Posterior cingulate gyrus (tissue), 11 donors: ENCODE measurements at regions of chr2 and their contacts with region 1.

Region 1: GRCh38 chr2:239979243-239980023 is 45.7 kb downstream of the NDUFA10 start:
- DNase-seq: peak in 6 of 10 donors; percentile 42 to 94 (median 65)

Region 2: DNA sequence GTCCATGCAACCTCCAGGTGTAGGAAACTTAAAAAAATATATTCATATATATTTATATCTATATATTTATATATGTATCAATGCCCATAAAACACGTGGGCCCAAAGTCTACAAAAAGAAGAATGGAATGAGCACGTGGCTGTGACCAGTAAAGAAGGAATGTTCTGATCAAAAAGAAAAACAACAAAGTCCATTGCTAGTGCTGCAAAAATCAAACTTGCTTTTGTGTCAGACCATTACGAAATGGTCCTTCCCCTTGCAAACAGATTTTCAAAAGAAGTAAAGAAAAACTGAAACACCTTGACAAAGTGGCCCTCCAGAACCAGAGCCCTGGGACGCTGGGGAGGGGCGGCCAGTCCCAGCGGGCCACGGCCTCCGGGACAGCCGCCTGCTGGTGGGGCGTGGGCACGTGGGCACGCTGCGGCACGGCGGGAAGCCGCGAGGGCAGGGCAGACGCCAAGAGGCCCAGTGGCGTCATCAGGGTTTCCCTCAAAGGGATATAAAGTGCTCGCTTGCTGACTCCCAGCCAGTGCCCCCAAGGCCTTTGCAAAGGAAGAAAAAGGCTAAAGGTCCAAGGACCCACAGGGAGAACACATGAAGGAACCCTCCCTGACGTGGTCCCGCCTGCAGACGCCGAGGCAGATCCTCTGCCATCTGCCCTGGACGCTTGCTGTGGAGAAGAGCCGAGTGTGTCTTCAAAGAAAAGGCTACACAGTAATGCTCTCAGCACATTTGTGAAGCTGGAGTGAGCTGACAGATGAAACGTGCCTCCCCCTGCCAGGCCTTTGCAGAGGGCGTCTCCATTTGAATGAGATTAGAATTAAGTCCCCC is 929.8 kb before region 1 on chr2:
- intact Hi-C with region 1: loop called (anchors 10 kb)
- DNase-seq: peak in 3 of 10 donors; percentile 42 to 59 (median 49)

Region 3: DNA sequence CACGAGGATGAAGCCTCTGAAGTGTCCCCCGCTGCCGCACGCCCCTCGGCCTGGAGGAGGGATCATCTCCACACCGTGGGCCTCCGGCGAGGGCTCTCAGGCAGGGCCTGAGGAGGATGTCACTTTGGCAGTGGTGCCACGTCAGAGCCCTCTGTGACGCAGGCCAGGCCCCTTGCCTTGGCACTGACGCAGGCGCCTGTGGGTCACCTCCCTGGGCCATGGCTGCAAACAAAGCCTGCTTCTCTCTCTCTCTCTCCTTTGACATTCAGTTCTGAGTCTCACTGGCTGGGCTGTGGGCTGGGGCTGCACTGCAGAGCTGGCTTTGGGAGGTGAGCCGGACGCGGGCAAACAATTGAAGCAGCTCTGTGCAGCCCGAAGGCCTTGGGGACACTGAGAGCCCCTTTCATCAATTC is 857.8 kb before region 1 on chr2:
- intact Hi-C with region 1: loop called (anchors 10 kb)
- DNase-seq: peak in 9 of 10 donors; percentile 64 to 94 (median 76)

Region 4: DNA sequence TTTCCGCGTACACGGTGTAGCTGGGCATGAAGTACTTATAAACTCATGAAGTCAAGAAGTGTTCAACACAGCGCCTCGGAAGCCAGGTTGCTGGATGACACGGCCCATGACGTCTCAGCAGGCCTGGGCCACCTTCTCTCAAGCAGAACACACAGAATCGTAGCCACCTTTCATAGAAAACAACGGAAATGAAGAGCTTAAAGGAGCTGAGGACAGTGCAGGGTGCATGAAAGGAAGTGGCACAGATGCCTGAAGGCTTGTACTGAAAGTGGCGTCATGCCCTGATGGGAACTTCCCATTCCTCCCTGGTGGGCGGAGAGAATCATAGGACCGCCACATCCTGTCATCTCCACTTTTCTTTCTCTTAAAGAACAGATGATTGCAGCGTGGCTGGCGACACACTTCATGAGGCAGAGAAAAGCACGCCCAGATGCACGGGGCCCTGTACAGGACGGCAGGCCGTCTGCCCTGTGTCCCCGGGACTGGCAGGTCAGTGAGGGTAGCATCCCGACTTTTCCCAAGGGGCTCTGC is 609.7 kb before region 1 on chr2:
- intact Hi-C with region 1: loop called (anchors 10 kb)
- DNase-seq: peak in 4 of 10 donors; percentile 37 to 89 (median 52)

Region 5: DNA sequence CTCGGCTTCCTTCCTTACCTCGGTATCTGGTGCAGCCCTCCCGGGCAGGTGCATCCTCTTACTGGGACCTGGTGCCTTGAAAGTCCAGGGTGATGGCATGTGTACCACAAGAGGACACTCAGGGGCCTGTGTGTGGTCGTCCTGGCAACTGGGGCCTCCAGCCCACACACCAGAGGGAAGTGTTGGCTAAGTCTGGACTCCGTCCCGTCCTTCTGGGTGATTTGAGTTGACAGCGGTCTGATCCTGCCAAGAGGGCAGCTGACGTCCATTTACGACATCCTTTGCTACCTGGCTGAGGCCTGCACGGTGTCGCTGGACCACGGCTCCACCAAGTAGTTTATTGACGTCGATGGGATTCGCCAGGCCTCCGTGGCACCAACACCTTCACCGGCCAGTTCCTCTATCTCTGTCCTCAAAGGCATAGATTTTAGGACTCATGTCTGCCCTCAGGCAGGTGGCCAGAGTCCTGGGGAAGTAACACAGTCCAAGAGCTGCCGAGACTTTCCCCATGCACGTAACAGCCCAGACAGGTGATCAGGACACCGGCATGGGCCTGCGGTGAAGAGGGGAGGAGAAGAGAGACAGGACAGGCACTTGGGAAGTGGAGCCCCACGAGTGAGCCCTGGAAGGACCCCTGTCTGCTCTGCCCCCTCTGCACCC is 392.7 kb before region 1 on chr2:
- intact Hi-C with region 1: no loop called
- DNase-seq: peak in 4 of 10 donors; percentile 25 to 75 (median 69)

Region 6: DNA sequence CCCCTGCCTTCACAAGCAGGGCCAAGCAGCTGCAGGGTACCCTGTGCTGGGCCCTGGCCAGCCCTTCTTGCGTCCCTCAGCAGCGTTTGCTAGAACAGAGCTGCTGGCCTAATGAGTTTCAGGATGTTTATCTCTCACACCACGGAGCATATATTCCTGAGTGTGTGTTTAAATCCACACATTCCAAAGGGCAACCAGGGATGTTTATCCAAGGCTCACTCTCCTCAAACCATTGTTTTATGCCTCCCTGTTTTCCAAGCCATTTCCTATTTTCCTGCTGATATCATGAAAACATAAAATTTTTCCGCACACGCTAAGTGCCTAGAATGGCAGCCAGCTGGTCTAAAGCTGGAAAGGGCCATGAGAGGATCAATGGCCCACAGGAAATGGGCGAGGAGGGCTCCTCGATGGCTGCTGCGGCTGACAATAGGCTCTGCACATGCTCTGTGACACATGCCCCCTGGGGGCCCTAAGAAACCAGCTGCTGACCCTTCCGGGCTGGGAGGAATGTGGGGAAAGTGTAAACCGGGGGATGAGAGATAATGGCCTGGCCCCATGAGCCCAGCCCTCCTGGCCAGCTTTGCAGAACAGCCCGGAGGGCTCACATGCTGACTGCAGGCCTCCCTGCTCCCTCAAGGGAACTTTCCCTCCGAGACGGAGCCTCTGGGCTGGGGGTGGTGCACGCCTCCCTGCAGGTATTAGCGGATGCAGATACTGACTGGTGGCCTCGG is 148.3 kb before region 1 on chr2:
- intact Hi-C with region 1: no loop called
- DNase-seq: peak in 1 of 10 donors; percentile 74

Region 7: GRCh38 chr2:239846789-239847676 is 132.4 kb before region 1 on chr2:
- intact Hi-C with region 1: no loop called
- DNase-seq: peak in 1 of 10 donors; percentile 27